OCI-LY7 (cell line): ENCODE measurements at regions of chr5 and their contacts with region 1.

Region 1: GRCh38 chr5:146137967-146138403 is 32.6 kb upstream of the PLAC8L1 start:
- DNase-seq: no peak
- H3K4me3 ChIP-seq: no peak overlapping the region
- H3K27ac ChIP-seq: no peak overlapping the region
- H3K4me1 ChIP-seq: no peaks in the 10 kb centered on the region
- CTCF ChIP-seq: no peak

Region 2: DNA sequence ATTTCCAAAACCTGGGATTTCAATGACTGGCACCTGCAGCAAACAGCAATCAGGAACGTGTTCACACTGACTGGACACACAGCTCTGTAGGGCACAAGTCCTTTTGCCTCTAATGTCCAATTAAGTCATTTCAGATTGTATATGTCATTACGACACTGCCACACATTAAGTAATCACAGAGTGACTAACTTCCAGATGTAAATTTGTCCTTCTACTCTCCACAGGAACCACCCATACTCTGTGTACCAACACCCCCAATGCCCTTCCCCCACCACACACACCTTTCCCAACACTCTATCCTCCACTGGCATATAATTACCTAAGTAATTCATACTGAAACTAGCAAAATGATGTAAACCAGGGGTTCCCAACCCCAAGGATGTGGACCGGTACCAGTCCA is 14.0 kb after region 1 on chr5:
- CTCF ChIA-PET with region 1: no interaction called
- POLR2A ChIA-PET with region 1: interaction called, 10 read pairs
- intact Hi-C with region 1: no loop called
- DNase-seq: no peak
- H3K4me3 ChIP-seq: no peak overlapping the region
- H3K27ac ChIP-seq: no peak overlapping the region
- H3K4me1 ChIP-seq: no peaks in the 10 kb centered on the region
- CTCF ChIP-seq: no peak

Region 3: GRCh38 chr5:146173597-146173996 is 35.6 kb after region 1 on chr5:
- CTCF ChIA-PET with region 1: no interaction called
- POLR2A ChIA-PET with region 1: no interaction called
- intact Hi-C with region 1: no loop called
- DNase-seq: peak; percentile 73
- H3K4me3 ChIP-seq: peak overlapping the region; percentile 35
- H3K27ac ChIP-seq: peak overlapping the region; percentile 91
- H3K4me1 ChIP-seq: peaks cover 31% of the 10 kb centered on the region
- CTCF ChIP-seq: no peak; the same call in 1 of the 2 replicates

Region 4: GRCh38 chr5:146484714-146485391 is 346.9 kb after region 1 on chr5:
- CTCF ChIA-PET with region 1: no interaction called
- POLR2A ChIA-PET with region 1: no interaction called
- intact Hi-C with region 1: loop called (anchors 10 kb)
- DNase-seq: no peak
- H3K4me3 ChIP-seq: no peak overlapping the region
- H3K27ac ChIP-seq: no peak overlapping the region
- H3K4me1 ChIP-seq: no peaks in the 10 kb centered on the region
- CTCF ChIP-seq: no peak